PC-3 (cell line): ENCODE measurements at regions of chr21 and their contacts with region 1.

Region 1: GRCh38 chr21:42056996-42057689 is 14.0 kb upstream of the UMODL1 start:
- DNase-seq: peak; percentile 95
- ATAC-seq: peak; percentile 86
- H3K4me3 ChIP-seq: peak overlapping the region; percentile 50
- H3K27ac ChIP-seq: peak overlapping the region; percentile 86
- H3K4me1 ChIP-seq: peaks cover 24% of the 10 kb centered on the region
- H3K27me3 ChIP-seq: no peaks in the 10 kb centered on the region
- CTCF ChIP-seq: no peak

Region 2: GRCh38 chr21:42009831-42010523 is 47.2 kb before region 1 on chr21 and contains the start of gene ZBTB21:
- CTCF ChIA-PET with region 1: no interaction called
- POLR2A ChIA-PET with region 1: no interaction called
- intact Hi-C with region 1: loop called (anchors 2 kb)
- DNase-seq: peak; percentile 99
- ATAC-seq: peak; percentile 84
- H3K4me3 ChIP-seq: peak within 1 kb of the TSS; percentile 80
- H3K27ac ChIP-seq: peak within 1 kb of the TSS; percentile 80
- H3K4me1 ChIP-seq: peaks cover 25% of the 10 kb centered on the region
- H3K27me3 ChIP-seq: no peaks in the 10 kb centered on the region
- CTCF ChIP-seq: no peak
- total RNA-seq, gene ZBTB21: 8.1 and 9.2 TPM in 2 replicates

Region 3: GRCh38 chr21:42195378-42196031 is 138.4 kb after region 1 on chr21:
- CTCF ChIA-PET with region 1: no interaction called
- POLR2A ChIA-PET with region 1: no interaction called
- intact Hi-C with region 1: no loop called
- DNase-seq: no peak
- ATAC-seq: no peak
- H3K4me3 ChIP-seq: no peak overlapping the region
- H3K27ac ChIP-seq: no peak overlapping the region
- H3K4me1 ChIP-seq: peaks cover 22% of the 10 kb centered on the region
- H3K27me3 ChIP-seq: no peaks in the 10 kb centered on the region
- CTCF ChIP-seq: no peak